ENCODE measurements at regions of chr7 and their contacts with region 1.

Region 1: DNA sequence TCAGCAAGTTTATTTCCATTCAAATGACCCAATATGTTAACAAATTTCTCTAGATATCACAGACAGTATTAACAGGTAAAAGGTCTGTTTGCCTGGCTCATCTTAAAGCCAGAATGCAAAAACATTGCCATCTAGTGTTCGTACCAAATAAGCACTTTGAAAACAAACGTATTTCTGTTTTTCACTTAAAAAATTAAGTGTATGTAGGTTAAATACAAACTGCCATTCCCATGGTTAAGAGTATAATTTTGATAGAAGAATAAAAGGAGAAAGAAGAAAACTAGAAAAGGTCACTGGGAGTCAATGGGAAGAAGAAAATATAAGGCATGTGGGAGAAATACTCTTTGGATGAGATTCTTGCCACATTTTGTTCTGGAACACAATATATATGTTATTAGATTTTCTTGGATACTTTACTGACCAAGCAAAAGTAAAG is 51.0 kb downstream of the ORC5 start:
- DNase-seq: no peak
- H3K4me3 ChIP-seq: no peak overlapping the region
- H3K27ac ChIP-seq: no peak overlapping the region
- H3K27me3 ChIP-seq: no peaks in the 10 kb centered on the region
- CTCF ChIP-seq: peak; percentile 76

Region 2: DNA sequence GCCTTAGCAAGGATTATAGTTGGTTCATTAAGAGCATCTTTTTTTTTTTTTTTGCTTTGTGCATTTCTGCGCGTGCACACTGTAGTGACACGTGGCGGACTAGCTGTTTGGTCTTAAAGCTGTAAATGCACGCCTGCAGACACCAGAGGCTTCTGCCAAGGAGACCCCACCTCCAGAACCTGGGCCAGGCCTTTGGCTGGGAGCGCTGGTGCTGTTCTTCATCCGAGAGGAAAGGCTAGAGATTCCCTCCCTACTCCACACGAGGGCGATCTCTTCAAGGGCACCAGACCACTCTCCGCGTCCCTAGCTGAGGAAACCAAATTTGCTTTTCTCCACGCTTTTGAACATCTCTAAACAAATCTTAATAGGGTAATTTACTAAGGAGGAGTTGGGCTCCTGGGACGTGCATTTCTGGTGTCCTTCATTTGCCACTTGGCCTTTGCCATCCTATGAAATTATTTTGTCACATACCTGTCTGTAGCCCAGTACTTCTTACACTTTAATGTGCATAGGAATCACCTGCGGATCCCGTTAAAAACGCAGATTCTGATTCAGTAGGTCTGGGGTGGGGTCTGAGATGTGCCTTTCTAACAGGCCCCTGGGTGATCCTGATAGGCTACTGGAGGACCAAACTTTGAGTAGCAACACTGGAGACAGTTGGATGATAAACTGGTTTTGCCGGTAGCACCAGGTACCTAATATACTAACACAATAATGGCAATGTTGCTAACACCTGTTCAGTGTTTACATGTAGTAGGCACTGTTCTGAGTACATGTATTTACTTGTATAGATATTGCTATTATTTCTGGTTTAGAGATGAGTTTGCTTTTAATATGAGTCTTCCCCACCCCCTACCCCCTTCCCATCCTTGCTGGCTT is 709.5 kb before region 1 on chr7:
- CTCF ChIA-PET with region 1: interaction called, 13 read pairs
- POLR2A ChIA-PET with region 1: no interaction called
- DNase-seq: peak; percentile 0
- H3K4me3 ChIP-seq: no peak overlapping the region
- H3K27ac ChIP-seq: no peak overlapping the region
- H3K27me3 ChIP-seq: peaks cover 38% of the 10 kb centered on the region
- CTCF ChIP-seq: peak; percentile 87

Region 3: GRCh38 chr7:103524042-103524907 is 632.6 kb before region 1 on chr7:
- CTCF ChIA-PET with region 1: interaction called, 24 read pairs
- POLR2A ChIA-PET with region 1: no interaction called
- DNase-seq: peak; percentile 29
- H3K4me3 ChIP-seq: no peak overlapping the region
- H3K27ac ChIP-seq: no peak overlapping the region
- H3K27me3 ChIP-seq: no peaks in the 10 kb centered on the region
- CTCF ChIP-seq: peak; percentile 66

Region 4: GRCh38 chr7:104112623-104113022 is 44.2 kb before region 1 on chr7:
- CTCF ChIA-PET with region 1: no interaction called
- POLR2A ChIA-PET with region 1: no interaction called
- DNase-seq: no peak
- H3K4me3 ChIP-seq: no peak overlapping the region
- H3K27ac ChIP-seq: no peak overlapping the region
- H3K27me3 ChIP-seq: peaks cover 2% of the 10 kb centered on the region
- CTCF ChIP-seq: no peak